GM10248 (cell line): ENCODE measurements at regions of chr2 and their contacts with region 1.

Region 1: GRCh38 chr2:152505495-152505906 is 170.5 kb downstream of the FMNL2 start:
- DNase-seq: peak; percentile 13
- CTCF ChIP-seq: no peak

Region 2: DNA sequence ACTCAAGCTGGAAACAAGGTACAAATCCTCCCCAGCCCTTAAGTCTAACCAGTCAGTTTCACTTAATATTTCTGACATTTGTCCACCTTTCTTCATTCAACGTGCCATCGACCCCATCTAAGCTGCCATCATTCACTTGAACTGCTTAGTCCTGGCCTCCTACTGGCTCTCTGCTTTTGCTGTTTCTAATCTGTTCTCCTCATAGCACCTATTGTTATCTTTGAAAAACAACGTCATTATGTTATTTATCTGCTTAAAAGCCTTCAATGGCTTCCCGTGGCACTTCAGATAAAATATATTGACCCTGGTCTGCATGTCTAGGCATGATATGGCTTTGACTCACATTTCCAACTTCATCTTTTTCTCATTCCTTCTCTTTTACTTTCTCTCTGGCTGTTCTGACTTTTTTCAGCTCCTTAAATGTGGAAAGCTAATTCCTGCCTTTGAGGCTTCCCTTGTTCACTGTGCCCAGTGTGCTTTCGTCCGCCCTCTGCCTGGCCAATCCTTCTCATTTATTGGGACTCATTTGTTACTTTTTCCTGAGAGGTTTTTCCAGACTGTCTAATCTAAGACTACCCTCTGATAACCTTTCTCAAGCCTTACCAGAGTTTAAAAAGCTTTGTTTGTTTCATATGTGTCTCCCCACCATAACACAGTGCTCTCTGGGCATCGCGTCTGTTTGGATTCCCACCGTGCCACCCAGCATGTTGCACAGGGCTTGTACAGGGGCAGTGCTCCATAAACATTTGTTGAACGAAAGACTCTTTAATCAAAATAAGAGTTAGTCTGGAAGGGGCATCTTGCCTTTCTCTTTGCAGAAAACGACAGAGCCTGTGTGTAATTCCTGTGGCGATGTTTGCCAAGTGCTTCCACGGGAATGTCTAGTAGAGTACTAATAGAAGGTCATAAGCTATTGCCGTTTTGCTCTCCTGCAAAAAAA is 13.4 kb after region 1 on chr2:
- CTCF ChIA-PET with region 1: interaction called, 16 read pairs
- POLR2A ChIA-PET with region 1: no interaction called
- DNase-seq: no peak
- CTCF ChIP-seq: no peak